BJ (cell line): ENCODE measurements at regions of chr11 and their contacts with region 1.

Region 1: GRCh38 chr11:111454561-111455192 is 57.5 kb downstream of the BTG4 start:
- DNase-seq: no peak
- H3K4me3 ChIP-seq: no peak overlapping the region
- H3K27me3 ChIP-seq: no peaks in the 10 kb centered on the region
- CTCF ChIP-seq: peak; percentile 59

Region 2: GRCh38 chr11:111476366-111476765 is 21.7 kb after region 1 on chr11:
- CTCF ChIA-PET with region 1: interaction called, 11 read pairs
- POLR2A ChIA-PET with region 1: no interaction called
- DNase-seq: no peak
- H3K4me3 ChIP-seq: no peak overlapping the region
- H3K27me3 ChIP-seq: no peaks in the 10 kb centered on the region
- CTCF ChIP-seq: no peak

Region 3: GRCh38 chr11:111549196-111549868 is 94.7 kb after region 1 on chr11:
- CTCF ChIA-PET with region 1: interaction called, 12 read pairs
- POLR2A ChIA-PET with region 1: no interaction called
- DNase-seq: no peak
- H3K4me3 ChIP-seq: no peak overlapping the region
- H3K27me3 ChIP-seq: no peaks in the 10 kb centered on the region
- CTCF ChIP-seq: no peak

Region 4: DNA sequence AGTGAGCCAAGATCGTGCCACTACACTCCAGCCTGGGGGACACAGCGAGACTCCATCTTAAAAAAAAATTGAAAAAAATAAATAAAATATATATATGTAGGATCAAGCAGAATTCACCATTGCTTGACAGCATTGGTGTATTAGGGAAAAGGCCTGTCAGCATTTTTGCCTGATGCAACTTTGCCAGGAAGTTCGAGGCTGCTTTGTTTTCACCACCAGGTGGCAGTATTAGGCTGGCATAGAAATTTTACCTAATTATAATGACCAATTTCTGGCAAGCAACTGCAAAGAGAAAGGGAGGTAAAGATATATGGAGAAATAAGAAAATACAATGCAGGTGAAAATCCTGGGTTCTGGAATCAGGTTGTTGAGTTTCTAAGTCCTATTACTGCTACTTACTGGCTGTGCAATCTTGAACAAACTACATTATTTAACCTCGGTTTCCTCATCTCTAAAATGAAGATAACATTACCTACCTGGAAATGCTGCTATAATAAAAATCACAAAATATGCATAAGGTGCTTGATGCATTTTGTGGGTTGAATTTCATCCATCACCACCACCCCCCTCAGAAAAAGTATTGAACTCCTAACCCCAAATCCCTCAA is 110.5 kb after region 1 on chr11:
- CTCF ChIA-PET with region 1: interaction called, 52 read pairs
- POLR2A ChIA-PET with region 1: no interaction called
- DNase-seq: no peak
- H3K4me3 ChIP-seq: no peak overlapping the region
- H3K27me3 ChIP-seq: no peaks in the 10 kb centered on the region
- CTCF ChIP-seq: peak; percentile 84

Region 5: DNA sequence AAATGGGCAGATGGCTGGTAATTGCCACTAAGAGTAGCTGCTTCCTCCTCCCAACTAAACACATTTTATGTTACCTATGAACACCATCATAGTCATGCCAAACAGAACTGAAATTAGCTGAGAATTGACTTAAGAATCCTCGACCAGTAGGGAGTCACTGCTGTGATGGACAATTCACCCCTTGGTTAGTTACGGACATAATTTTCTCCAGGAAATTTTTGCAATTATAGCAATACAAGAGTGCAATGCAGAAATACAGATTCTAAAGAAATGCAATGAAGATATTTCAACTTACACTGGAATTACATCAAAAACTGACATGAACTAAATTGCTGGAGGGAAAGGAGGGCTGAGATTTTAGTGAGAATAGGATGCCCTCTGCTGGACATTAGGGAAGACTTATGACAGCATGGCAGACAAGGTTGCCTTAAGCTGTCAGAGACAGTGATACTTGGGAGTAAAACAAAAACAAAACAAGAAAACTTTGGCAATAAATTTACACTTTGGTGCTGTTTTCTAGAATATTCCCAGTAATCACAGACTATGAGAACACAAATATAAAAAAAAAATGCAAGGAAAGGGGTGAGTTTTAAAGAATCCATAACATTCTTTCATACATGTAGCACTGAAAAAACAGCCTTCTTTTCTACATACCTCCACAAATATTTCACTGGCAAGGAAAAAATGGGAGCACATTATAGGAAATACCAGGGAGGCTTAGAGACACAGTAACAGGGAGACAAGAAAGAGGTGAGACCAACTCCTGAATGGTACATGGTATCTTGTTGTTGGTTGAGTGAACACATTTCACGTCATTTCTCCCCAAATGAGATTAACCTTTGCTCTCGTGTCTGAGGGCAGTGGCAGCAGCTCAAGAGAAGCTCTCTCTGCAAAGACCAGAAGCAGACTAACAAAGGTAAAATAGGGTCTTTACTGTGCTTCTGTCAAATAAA is 322.7 kb after region 1 on chr11:
- CTCF ChIA-PET with region 1: interaction called, 15 read pairs
- POLR2A ChIA-PET with region 1: no interaction called
- DNase-seq: no peak
- H3K4me3 ChIP-seq: no peak overlapping the region
- H3K27me3 ChIP-seq: no peaks in the 10 kb centered on the region
- CTCF ChIP-seq: peak; percentile 74